K562 (cell line): ENCODE measurements at regions of chr3 and their contacts with region 1.

Region 1: DNA sequence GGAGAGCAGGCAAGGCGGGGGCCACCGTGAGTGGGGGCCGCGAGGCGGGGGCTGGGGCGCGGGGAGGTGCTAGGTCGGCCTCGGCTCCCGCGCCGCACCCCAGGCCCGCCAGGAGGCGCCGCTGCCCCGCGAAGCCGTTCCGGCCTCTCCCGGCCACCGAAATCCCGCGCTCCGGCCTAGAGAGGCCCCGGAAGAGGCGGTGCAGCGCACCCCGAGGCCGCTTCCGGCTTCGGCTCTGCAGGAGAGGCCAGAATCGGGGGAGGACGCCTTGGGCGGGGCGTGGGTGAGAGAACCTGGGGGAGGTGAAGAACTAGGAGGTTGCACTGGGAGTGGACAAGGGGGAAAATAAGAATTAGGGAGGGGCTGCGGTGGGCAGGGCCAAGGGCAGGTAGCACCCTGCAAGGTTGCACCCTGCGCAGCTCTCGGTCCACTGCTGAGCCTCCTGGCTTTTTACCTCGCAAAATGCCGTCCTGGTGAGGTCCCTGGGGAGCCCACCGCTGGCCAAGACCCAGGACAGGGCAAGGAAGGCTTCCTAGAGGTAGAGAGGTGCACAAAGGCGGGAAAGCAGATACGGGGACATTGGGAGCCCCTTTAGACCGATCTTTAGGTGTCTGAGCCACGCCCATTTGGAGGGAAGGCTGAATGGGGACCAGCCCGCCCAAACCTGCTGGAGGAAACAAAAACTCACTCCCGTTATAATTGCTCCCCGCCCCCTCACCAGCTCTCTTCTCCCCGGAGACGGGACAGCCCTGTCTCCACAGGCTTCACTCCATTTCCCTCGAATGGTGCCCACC is 8.4 kb upstream of the GNAI2 start:
- DNase-seq: peak; percentile 88 to 96 (median 90)
- ATAC-seq: peak; percentile 94
- H3K4me3 ChIP-seq: peak overlapping the region; percentile 47
- H3K27ac ChIP-seq: peak overlapping the region; percentile 82
- H3K4me1 ChIP-seq: peaks cover 18 to 43% of the 10 kb centered on the region in 2 experiments
- H3K27me3 ChIP-seq: no peaks in the 10 kb centered on the region
- CTCF ChIP-seq: peak; percentile 64 to 94 (median 84)
- EP300 ChIP-seq: no peak
- POLR2A ChIP-seq: 0 out of 2 replicates have a peak, but pooled peaks have one; percentile 48
- RAD21 ChIP-seq: peak; percentile 96 to 97

Region 2: GRCh38 chr3:49759226-49759625 is 468.4 kb before region 1 on chr3:
- CTCF ChIA-PET with region 1: no interaction called
- POLR2A ChIA-PET with region 1: no interaction called
- in situ Hi-C with region 1: no loop called
- intact Hi-C with region 1: no loop called
- DNase-seq: peak in 1 of 4 experiments; percentile 9
- ATAC-seq: no peak
- H3K4me3 ChIP-seq: no peak overlapping the region
- H3K27ac ChIP-seq: no peak overlapping the region
- H3K4me1 ChIP-seq: no peaks in the 10 kb centered on the region; a peak in 2 of 5 replicates
- H3K27me3 ChIP-seq: no peaks in the 10 kb centered on the region
- CTCF ChIP-seq: no peak
- EP300 ChIP-seq: no peak
- POLR2A ChIP-seq: no peak
- RAD21 ChIP-seq: no peak

Region 3: DNA sequence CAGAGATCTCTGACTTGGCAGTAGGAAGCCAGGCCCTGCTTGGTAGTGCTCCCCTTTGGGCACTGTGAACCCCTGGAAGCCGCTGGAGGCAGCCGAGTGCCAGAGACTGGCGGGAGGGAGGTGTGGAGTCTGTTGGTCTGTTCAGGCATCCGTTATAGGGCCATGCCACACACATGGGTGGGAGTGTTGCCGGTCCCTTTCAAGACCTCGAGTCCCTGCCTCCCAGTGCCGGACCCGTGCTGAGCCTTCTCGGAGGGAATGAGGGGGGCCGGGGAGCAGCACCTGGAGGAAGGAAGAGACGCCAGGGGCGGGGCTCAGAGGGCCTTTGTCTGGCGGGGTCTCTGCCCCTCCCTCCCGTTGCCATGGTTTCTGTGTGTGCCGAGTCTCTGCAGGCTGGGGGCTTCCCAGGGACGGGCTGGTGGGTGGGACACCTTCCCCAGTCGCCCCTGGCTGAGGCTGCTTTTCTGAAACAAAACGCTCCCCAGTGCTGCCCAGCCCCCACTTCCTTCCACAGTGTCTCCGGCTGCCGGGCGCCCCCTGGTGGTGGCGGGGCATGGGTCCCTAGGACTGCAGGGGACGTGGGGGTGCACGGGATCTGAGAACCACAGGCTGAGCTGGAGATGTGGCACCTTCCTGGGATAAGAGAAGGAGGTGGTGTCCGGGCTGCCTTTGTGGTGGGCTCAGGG is 18.4 kb after region 1 on chr3:
- CTCF ChIA-PET with region 1: interaction called, 26 read pairs
- POLR2A ChIA-PET with region 1: interaction called, 4 read pairs
- in situ Hi-C with region 1: no loop called
- intact Hi-C with region 1: loop called (anchors 1 kb)
- DNase-seq: peak; percentile 73 to 89 (median 80)
- ATAC-seq: peak; percentile 96
- H3K4me3 ChIP-seq: peak overlapping the region; percentile 32
- H3K27ac ChIP-seq: peak overlapping the region; percentile 85
- H3K4me1 ChIP-seq: peaks cover 42 to 51% of the 10 kb centered on the region in 2 experiments
- H3K27me3 ChIP-seq: no peaks in the 10 kb centered on the region
- CTCF ChIP-seq: peak; percentile 85 to 93 (median 91)
- EP300 ChIP-seq: no peak
- POLR2A ChIP-seq: no peak
- RAD21 ChIP-seq: peak; percentile 89 to 90

Region 4: GRCh38 chr3:50272911-50273693 is 45.5 kb after region 1 on chr3:
- CTCF ChIA-PET with region 1: interaction called, 37 read pairs
- POLR2A ChIA-PET with region 1: no interaction called
- in situ Hi-C with region 1: loop called (anchors 5 kb)
- intact Hi-C with region 1: loop called (anchors 1 kb)
- DNase-seq: peak; percentile 87 to 92 (median 88)
- ATAC-seq: peak; percentile 90
- H3K4me3 ChIP-seq: peak overlapping the region; percentile 28
- H3K27ac ChIP-seq: no peak overlapping the region
- H3K4me1 ChIP-seq: peaks cover 4 to 61% of the 10 kb centered on the region in 2 experiments; a peak in 3 of 5 replicates
- H3K27me3 ChIP-seq: no peaks in the 10 kb centered on the region
- CTCF ChIP-seq: peak; percentile 89 to 94 (median 94)
- EP300 ChIP-seq: no peak
- POLR2A ChIP-seq: no peak
- RAD21 ChIP-seq: peak; percentile 97 to 98